ENCODE measurements at regions of chr19 and their contacts with region 1.

Region 1: DNA sequence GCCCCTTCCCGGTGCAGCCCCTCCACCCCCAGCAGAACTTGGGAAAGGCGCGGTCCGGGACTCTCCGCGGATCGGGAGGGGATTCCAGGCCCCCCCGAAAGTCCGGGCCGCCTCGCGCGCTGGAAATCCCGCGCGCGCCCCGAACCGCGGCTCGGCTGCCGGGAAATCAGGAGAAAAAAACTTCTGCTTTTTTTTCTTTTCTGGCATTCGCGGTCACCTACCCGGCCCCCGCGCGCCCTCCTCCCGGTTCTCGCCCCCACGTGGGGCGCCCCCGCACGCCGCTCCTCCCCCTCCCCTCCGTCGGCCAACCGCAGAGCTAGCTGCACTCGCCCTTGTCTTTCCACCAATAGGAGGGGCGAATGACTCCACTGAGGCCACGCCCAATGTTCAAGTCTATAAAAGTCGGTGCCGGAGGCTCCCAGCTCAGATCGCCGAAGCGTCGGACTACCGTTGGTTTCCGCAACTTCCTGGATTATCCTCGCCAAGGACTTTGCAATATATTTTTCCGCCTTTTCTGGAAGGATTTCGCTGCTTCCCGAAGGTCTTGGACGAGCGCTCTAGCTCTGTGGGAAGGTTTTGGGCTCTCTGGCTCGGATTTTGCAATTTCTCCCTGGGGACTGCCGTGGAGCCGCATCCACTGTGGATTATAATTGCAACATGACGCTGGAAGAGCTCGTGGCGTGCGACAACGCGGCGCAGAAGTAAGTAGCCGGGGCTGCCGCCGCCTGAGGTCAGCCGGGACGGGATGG is at the start of gene GADD45B:
- DNase-seq: peak; percentile 96
- ATAC-seq: peak; percentile 59
- H3K4me3 Mint-ChIP-seq: peak within 1 kb of the TSS; percentile 99
- H3K27ac Mint-ChIP-seq: peak within 1 kb of the TSS; percentile 93
- H3K4me1 Mint-ChIP-seq: peaks cover 32% of the 10 kb centered on the region
- H3K27me3 Mint-ChIP-seq: no peaks in the 10 kb centered on the region
- CTCF ChIP-seq: no peak
- total RNA-seq, gene GADD45B: 291 and 302 TPM in 2 replicates

Region 2: GRCh38 chr19:2282062-2282861 is 193.6 kb before region 1 on chr19 and contains the start of gene PEAK3:
- CTCF ChIA-PET with region 1: interaction called, 3 read pairs
- POLR2A ChIA-PET with region 1: interaction called, 14 read pairs
- intact Hi-C with region 1: no loop called
- DNase-seq: peak; percentile 46
- ATAC-seq: peak; percentile 60
- H3K4me3 Mint-ChIP-seq: peak within 1 kb of the TSS; percentile 60
- H3K27ac Mint-ChIP-seq: peak within 1 kb of the TSS; percentile 24
- H3K4me1 Mint-ChIP-seq: peaks cover 33% of the 10 kb centered on the region
- H3K27me3 Mint-ChIP-seq: no peaks in the 10 kb centered on the region
- CTCF ChIP-seq: no peak
- total RNA-seq, gene PEAK3: 0.09 TPM in 1 of 2 replicates, not detected in the other

Region 3: DNA sequence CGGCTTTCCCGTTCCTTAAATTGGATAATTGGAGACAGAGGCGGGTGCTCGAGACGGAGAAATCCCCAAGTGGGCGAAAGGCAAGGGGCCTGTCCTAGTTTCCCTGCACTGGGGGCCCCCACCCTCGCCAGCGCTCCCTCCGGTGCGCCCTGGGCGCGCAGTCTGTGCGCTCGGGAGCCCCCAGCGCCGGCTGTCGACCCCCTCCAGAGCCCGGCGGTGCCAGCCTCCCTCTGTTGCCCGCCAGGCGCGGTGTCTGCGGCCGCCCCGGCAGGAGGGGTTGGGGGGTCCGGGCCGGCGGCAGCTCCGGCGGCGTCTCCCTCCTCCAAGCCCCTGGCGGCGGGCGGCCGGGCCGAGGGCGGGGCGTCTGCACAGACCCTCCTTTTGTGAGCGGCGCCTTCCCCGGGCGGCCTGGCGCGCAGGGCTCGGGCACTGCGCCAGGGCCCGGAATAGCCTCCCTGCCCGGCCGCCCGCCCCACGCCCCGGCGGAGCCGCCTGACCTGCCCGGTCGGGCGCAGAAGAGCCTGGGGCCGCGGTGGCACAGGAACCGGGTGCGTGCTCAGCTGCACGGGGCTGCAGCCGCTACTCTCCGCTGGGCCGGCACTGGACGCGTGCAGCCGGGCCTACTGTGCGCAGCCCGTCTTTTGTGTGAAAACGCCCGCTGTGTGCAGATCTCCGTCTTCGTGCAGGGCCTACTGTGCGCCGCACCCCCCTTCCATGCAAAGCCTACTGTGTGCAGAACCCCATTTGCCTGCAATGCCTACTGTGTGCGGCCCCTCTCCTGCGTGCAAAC is 13.3 kb after region 1 on chr19:
- CTCF ChIA-PET with region 1: interaction called, 3 read pairs
- POLR2A ChIA-PET with region 1: interaction called, 83 read pairs
- intact Hi-C with region 1: loop called (anchors 1 kb)
- DNase-seq: peak; percentile 44
- ATAC-seq: no peak
- H3K4me3 Mint-ChIP-seq: peak overlapping the region; percentile 41
- H3K27ac Mint-ChIP-seq: no peak overlapping the region
- H3K4me1 Mint-ChIP-seq: peaks cover 74% of the 10 kb centered on the region
- H3K27me3 Mint-ChIP-seq: peaks cover 28% of the 10 kb centered on the region
- CTCF ChIP-seq: no peak

Region 4: GRCh38 chr19:2529473-2529918 is 53.6 kb after region 1 on chr19:
- CTCF ChIA-PET with region 1: no interaction called
- POLR2A ChIA-PET with region 1: interaction called, 12 read pairs
- intact Hi-C with region 1: no loop called
- DNase-seq: no peak
- ATAC-seq: no peak
- H3K4me3 Mint-ChIP-seq: no peak overlapping the region
- H3K27ac Mint-ChIP-seq: peak overlapping the region; percentile 53
- H3K4me1 Mint-ChIP-seq: peaks cover 22% of the 10 kb centered on the region
- H3K27me3 Mint-ChIP-seq: no peaks in the 10 kb centered on the region
- CTCF ChIP-seq: no peak

Region 5: DNA sequence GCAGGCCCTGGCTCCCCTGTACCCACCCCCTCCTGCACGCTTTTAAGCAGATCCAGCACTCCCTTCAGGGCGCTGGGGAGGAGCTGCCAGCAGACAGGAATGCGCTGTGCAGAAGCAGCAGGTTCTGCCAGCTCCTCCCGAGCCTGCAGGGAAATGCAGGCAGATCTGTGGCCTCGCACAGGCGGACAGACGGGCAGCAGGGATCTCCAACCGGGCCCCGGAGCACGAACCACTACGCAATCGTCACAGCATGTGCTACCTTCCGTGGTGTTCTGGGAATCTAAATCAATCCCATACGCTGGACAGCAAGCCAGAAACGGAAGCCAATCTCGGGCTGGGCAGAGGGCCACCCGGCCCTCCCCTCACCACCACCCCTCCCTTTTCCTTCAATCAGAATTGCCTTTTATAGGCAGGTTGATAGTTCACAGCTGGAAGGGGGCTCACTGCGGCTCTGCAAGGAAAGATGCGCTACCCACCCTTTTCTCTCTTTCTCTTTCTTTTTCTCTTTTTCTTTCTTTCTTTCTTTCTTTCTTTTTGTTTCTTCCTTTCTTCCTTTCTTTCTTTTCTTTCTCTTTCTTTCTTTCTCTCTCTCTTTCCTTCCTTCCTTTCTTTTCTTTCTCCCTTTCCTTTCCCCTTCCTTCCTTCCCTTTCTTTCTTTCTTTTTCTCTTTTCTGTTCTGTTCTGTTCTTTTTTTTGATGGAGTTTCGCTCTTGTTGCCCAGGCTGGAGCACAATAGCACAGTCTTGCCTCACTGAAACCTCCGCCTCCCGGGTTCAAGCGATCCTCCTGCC is 126.7 kb after region 1 on chr19:
- CTCF ChIA-PET with region 1: interaction called, 131 read pairs
- POLR2A ChIA-PET with region 1: interaction called, 979 read pairs
- intact Hi-C with region 1: no loop called
- DNase-seq: no peak
- ATAC-seq: no peak
- H3K4me3 Mint-ChIP-seq: no peak overlapping the region
- H3K27ac Mint-ChIP-seq: no peak overlapping the region
- H3K4me1 Mint-ChIP-seq: peaks cover 56% of the 10 kb centered on the region
- H3K27me3 Mint-ChIP-seq: no peaks in the 10 kb centered on the region
- CTCF ChIP-seq: no peak

Region 6: DNA sequence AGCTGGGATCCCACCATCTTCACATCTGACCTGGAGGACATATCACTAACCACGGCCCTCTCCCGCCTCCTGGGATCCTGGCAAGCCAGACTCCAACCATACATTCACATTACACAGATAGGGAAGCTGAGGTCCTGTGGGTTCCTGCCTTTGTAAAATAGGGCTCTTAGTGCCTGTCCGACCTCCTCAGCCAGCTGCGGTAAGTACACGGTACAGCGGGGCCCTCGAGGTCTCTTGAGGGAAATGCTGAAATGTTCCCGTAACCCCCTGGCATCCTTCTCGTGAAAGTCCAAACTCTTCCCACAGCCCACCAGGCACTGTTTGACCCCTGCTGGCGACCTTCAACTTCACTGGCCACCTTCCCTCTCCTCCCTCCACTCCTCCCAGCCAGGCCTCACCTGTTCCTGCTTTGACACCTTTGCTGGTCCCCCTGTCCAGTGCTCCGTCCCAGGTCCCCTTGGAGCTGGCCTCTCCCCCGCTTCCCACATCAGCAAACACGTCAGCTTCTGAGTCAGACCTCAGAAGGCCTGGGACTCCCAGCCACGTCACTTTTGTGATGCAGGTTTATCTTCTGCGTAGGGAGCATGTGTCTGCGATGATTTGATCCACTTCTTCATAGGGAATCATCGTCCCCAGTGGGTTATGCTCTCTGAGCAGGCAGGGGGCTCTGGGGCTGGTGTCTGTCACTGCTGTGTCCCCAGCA is 235.4 kb after region 1 on chr19:
- CTCF ChIA-PET with region 1: no interaction called
- POLR2A ChIA-PET with region 1: interaction called, 15 read pairs
- intact Hi-C with region 1: no loop called
- DNase-seq: no peak
- ATAC-seq: peak; percentile 5
- H3K4me3 Mint-ChIP-seq: peak overlapping the region; percentile 66
- H3K27ac Mint-ChIP-seq: peak overlapping the region; percentile 87
- H3K4me1 Mint-ChIP-seq: peaks cover 39% of the 10 kb centered on the region
- H3K27me3 Mint-ChIP-seq: no peaks in the 10 kb centered on the region
- CTCF ChIP-seq: no peak

Region 7: GRCh38 chr19:3006075-3006767 is 530.3 kb after region 1 on chr19:
- CTCF ChIA-PET with region 1: no interaction called
- POLR2A ChIA-PET with region 1: no interaction called
- intact Hi-C with region 1: no loop called
- DNase-seq: no peak
- ATAC-seq: no peak
- H3K4me3 Mint-ChIP-seq: no peak overlapping the region
- H3K27ac Mint-ChIP-seq: no peak overlapping the region
- H3K4me1 Mint-ChIP-seq: no peaks in the 10 kb centered on the region
- H3K27me3 Mint-ChIP-seq: peaks cover 4% of the 10 kb centered on the region
- CTCF ChIP-seq: no peak